Naive thymus-derived CD4-positive, alpha-beta T cell (primary cell): ENCODE measurements at regions of chr17 and their contacts with region 1.

Region 1: GRCh38 chr17:51120739-51121617 is at the start of gene SPAG9:
- DNase-seq: peak; percentile 87 to 97 (median 92)
- ATAC-seq: peak; percentile 92
- H3K4me3 ChIP-seq: peak within 1 kb of the TSS; percentile 97
- H3K4me3 Mint-ChIP-seq: peak within 1 kb of the TSS; percentile 87 to 99 (median 97)
- H3K27ac ChIP-seq: peak within 1 kb of the TSS; percentile 96
- H3K27ac Mint-ChIP-seq: peak within 1 kb of the TSS; percentile 95 to 100 (median 99)
- H3K4me1 ChIP-seq: peaks cover 28 to 35% of the 10 kb centered on the region in 2 donors
- H3K4me1 Mint-ChIP-seq: peaks cover 27 to 53% (median 49%) of the 10 kb centered on the region in 7 donors
- H3K27me3 ChIP-seq: no peaks in the 10 kb centered on the region
- H3K27me3 Mint-ChIP-seq: no peaks in the 10 kb centered on the region
- total RNA-seq, gene SPAG9: 52.6 to 73.4 (median 54.9) TPM

Region 2: GRCh38 chr17:50541716-50542688 is 579.0 kb before region 1 on chr17:
- CTCF ChIA-PET with region 1: no interaction called
- POLR2A ChIA-PET with region 1: no interaction called
- intact Hi-C with region 1: loop called in 1 of 2 experiments (anchors 1 kb)
- DNase-seq: peak; percentile 68 to 96 (median 83)
- ATAC-seq: peak; percentile 90
- H3K4me3 ChIP-seq: peak overlapping the region; percentile 61
- H3K4me3 Mint-ChIP-seq: peak overlapping the region; percentile 83 to 88 (median 85)
- H3K27ac ChIP-seq: peak overlapping the region; percentile 61
- H3K27ac Mint-ChIP-seq: peak overlapping the region; percentile 24 to 90 (median 67)
- H3K4me1 ChIP-seq: peaks cover 10 to 16% of the 10 kb centered on the region in 2 donors
- H3K4me1 Mint-ChIP-seq: peaks cover 0 to 22% (median 22%) of the 10 kb centered on the region in 7 donors
- H3K27me3 ChIP-seq: no peaks in the 10 kb centered on the region
- H3K27me3 Mint-ChIP-seq: peaks cover 0 to 28% (median 7%) of the 10 kb centered on the region in 5 donors

Region 3: GRCh38 chr17:50949989-50950881 is 170.7 kb before region 1 on chr17:
- CTCF ChIA-PET with region 1: no interaction called
- POLR2A ChIA-PET with region 1: no interaction called
- intact Hi-C with region 1: no loop called
- DNase-seq: peak; percentile 34 to 71 (median 51)
- ATAC-seq: peak; percentile 88
- H3K4me3 ChIP-seq: no peak overlapping the region
- H3K4me3 Mint-ChIP-seq: peak overlapping the region in 2 of 10 donors; percentile 5 to 62
- H3K27ac ChIP-seq: no peak overlapping the region
- H3K27ac Mint-ChIP-seq: peak overlapping the region in 5 of 9 donors; percentile 31 to 90 (median 69)
- H3K4me1 ChIP-seq: peaks cover 0 to 6% of the 10 kb centered on the region in 2 donors
- H3K4me1 Mint-ChIP-seq: peaks cover 14 to 39% (median 24%) of the 10 kb centered on the region in 7 donors
- H3K27me3 ChIP-seq: no peaks in the 10 kb centered on the region
- H3K27me3 Mint-ChIP-seq: no peaks in the 10 kb centered on the region

Region 4: DNA sequence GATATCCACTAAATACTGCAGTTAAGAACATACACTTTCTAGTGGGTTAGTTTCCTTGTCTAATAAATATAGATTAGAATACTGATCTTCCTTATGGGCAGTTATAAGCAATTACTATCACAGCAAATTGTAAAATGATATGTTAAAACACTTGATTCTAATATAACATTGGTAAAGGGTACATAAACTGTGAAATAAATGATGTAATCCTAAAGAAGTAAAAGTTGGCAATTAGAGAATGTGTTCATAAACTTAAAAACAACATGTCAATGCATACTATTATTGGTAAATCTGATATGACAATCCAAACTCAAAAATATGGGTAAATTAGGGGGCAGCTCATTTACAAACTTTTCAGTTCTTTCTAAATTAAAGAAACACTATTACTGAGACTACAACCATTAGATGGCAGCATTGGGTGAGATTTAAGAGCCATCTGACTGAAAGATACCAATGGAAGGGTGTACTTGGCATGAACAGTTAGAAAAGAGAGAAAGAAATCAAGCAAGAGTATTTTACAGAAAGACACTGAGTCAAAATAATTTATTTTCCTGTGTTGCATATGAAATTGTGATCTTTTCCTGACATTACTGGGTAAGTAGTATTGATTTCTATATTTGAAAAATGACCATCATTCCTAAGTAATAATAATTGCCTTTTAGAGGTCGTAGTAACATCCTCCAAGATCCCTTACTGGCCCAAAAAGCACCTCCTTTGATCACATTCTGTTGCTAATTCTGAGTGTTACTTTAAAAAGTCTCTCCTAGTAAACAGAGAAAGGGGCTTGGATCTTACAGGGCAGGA is 119.9 kb before region 1 on chr17:
- CTCF ChIA-PET with region 1: interaction called, 11 read pairs
- POLR2A ChIA-PET with region 1: interaction called, 4 read pairs
- intact Hi-C with region 1: loop called in 1 of 2 experiments (anchors 1 kb)
- DNase-seq: peak in 7 of 9 donors; percentile 55 to 74 (median 65)
- ATAC-seq: peak; percentile 82
- H3K4me3 ChIP-seq: no peak overlapping the region
- H3K4me3 Mint-ChIP-seq: no peak overlapping the region
- H3K27ac ChIP-seq: no peak overlapping the region
- H3K27ac Mint-ChIP-seq: peak overlapping the region in 3 of 9 donors; percentile 11 to 60 (median 30)
- H3K4me1 ChIP-seq: no peaks in the 10 kb centered on the region
- H3K4me1 Mint-ChIP-seq: peaks cover 0 to 6% (median 5%) of the 10 kb centered on the region in 7 donors
- H3K27me3 ChIP-seq: no peaks in the 10 kb centered on the region
- H3K27me3 Mint-ChIP-seq: no peaks in the 10 kb centered on the region

Region 5: DNA sequence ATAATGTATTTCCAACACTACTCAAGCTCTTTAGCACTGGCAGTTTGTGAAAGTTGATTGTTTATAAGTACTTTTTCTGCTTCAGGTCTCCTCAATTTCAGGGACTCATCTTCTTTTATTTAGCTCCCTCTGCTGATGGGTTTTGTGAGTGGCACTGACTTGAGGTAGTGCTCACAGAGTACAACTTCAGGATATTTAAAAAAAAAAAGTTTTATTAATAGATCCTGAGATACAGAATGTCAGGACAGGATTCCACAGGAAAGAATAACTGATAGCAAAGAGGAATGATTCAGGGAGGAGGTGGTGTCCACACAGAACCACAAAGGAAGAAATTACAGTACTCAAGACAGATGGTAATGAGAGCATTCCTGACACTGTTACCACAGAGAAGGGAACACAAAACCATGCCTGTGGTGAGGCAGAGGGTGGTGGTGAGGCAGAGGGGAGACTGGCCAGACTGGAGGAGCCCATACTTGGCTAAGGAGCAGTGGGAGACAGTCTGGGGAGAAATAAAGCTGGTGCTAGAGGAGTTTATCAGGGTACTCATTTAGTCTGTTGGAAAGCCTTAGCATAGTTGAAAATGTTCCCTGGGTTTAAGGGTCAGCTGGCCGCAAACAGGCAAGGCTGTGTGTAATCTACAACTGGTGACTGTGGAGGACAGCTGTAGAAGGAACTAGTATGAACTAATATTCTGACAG is 64.0 kb before region 1 on chr17:
- CTCF ChIA-PET with region 1: no interaction called
- POLR2A ChIA-PET with region 1: no interaction called
- intact Hi-C with region 1: loop called in 1 of 2 experiments (anchors 10 kb)
- DNase-seq: peak in 7 of 9 donors; percentile 23 to 55 (median 44)
- ATAC-seq: peak; percentile 75
- H3K4me3 ChIP-seq: no peak overlapping the region
- H3K4me3 Mint-ChIP-seq: no peak overlapping the region
- H3K27ac ChIP-seq: no peak overlapping the region
- H3K27ac Mint-ChIP-seq: peak overlapping the region in 1 of 9 donors; percentile 84
- H3K4me1 ChIP-seq: no peaks in the 10 kb centered on the region
- H3K4me1 Mint-ChIP-seq: peaks cover 4 to 16% (median 12%) of the 10 kb centered on the region in 7 donors
- H3K27me3 ChIP-seq: no peaks in the 10 kb centered on the region
- H3K27me3 Mint-ChIP-seq: no peaks in the 10 kb centered on the region

Region 6: GRCh38 chr17:51166197-51166986 is 45.4 kb after region 1 on chr17 and contains the start of gene NME2:
- CTCF ChIA-PET with region 1: no interaction called
- POLR2A ChIA-PET with region 1: interaction called, 5 read pairs
- intact Hi-C with region 1: loop called (anchors 1 kb)
- DNase-seq: peak; percentile 42 to 87 (median 50)
- ATAC-seq: peak; percentile 85
- H3K4me3 ChIP-seq: peak within 1 kb of the TSS; percentile 89
- H3K4me3 Mint-ChIP-seq: peak within 1 kb of the TSS; percentile 87 to 98 (median 95)
- H3K27ac ChIP-seq: peak within 1 kb of the TSS; percentile 80
- H3K27ac Mint-ChIP-seq: peak within 1 kb of the TSS; percentile 89 to 99 (median 95)
- H3K4me1 ChIP-seq: peaks cover 0 to 5% of the 10 kb centered on the region in 2 donors
- H3K4me1 Mint-ChIP-seq: peaks cover 0 to 36% (median 24%) of the 10 kb centered on the region in 7 donors
- H3K27me3 ChIP-seq: no peaks in the 10 kb centered on the region
- H3K27me3 Mint-ChIP-seq: no peaks in the 10 kb centered on the region
- total RNA-seq, gene NME2: 133 to 457 (median 179) TPM